B cell (primary cell): ENCODE measurements at regions of chr11 and their contacts with region 1.

Region 1: DNA sequence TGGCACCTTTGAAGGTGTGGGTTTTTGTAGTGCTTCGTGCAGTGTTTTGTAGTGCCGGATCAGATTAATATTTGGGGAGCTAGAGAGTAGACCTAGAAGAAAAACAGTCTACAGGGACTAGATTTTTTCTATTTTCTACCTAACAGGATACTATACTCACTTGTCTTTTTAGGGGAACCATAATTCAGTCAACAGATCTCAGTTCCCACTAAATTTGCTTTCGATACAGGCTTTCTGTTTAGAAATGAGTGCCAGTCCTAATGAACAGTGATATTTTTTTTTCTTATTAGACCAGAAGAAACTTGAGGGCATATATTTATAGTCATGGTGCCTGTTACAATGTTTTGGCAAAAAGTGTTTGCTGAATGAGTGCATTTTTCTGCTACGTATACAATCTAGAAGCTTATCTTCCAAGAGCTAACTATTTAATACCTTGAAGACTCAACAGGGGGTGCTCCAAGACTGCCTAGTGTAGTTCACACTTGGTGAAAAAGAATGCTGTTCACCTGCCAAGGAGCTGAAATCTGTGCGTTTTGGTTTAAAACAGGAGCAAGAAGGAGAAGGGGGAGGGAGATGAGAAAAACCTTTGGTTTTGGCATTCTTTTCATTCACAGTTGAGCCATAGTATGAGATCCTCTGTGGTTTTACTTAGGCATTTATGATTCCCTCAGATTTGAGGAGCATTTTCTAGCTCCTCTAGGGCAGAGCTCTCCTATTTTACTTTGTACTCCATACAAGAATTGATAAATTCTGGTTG is 44.9 kb upstream of the VSTM5 start:
- DNase-seq: peak; percentile 44
- ATAC-seq: no peak
- H3K4me3 ChIP-seq: no peak overlapping the region
- H3K4me3 Mint-ChIP-seq: no peak overlapping the region
- H3K27ac ChIP-seq: no peak overlapping the region
- H3K27ac Mint-ChIP-seq: no peak overlapping the region
- H3K4me1 ChIP-seq: no peaks in the 10 kb centered on the region
- H3K4me1 Mint-ChIP-seq: no peaks in the 10 kb centered on the region
- H3K27me3 ChIP-seq: peaks cover 0 to 7% (median 5%) of the 10 kb centered on the region in 4 experiments
- H3K27me3 Mint-ChIP-seq: peaks cover 37% of the 10 kb centered on the region
- CTCF ChIP-seq: peak; percentile 57

Region 2: DNA sequence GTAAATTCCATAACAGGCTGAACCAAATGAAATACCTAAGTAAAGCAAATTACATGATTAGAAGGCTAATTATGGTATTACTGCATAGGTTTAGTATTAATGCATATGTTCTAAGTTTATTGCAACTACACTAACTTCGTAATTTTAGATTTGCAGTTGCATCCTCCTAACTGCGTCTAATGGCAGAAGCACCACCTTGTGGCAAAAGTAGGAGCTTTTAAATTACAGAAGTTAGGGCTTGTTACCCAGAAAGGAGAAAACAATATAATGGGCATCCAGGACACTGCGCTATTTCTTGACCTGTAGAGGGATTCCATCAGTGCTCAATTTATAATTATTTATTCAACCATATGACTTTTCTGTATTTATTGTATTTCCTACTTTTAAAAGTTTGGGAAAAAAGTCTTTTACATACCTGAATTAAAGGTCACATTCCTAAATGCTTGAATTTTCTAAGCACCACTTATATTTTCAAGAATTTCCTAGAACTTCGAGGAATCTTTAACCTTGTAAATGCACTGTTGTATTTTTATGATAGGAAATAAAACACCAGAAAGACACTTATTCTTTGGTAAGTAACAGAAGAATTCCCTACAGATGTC is 522.2 kb after region 1 on chr11:
- CTCF ChIA-PET with region 1: interaction called, 4 read pairs
- POLR2A ChIA-PET with region 1: no interaction called
- intact Hi-C with region 1: loop called (anchors 5 kb)
- DNase-seq: no peak
- ATAC-seq: no peak
- H3K4me3 ChIP-seq: no peak overlapping the region
- H3K4me3 Mint-ChIP-seq: no peak overlapping the region
- H3K27ac ChIP-seq: no peak overlapping the region
- H3K27ac Mint-ChIP-seq: no peak overlapping the region
- H3K4me1 ChIP-seq: no peaks in the 10 kb centered on the region
- H3K4me1 Mint-ChIP-seq: no peaks in the 10 kb centered on the region
- H3K27me3 ChIP-seq: no peaks in the 10 kb centered on the region
- H3K27me3 Mint-ChIP-seq: no peaks in the 10 kb centered on the region
- CTCF ChIP-seq: no peak